Cardiac septum (tissue), 1 donor: ENCODE measurements at regions of chrX and their contacts with region 1.

Region 1: DNA sequence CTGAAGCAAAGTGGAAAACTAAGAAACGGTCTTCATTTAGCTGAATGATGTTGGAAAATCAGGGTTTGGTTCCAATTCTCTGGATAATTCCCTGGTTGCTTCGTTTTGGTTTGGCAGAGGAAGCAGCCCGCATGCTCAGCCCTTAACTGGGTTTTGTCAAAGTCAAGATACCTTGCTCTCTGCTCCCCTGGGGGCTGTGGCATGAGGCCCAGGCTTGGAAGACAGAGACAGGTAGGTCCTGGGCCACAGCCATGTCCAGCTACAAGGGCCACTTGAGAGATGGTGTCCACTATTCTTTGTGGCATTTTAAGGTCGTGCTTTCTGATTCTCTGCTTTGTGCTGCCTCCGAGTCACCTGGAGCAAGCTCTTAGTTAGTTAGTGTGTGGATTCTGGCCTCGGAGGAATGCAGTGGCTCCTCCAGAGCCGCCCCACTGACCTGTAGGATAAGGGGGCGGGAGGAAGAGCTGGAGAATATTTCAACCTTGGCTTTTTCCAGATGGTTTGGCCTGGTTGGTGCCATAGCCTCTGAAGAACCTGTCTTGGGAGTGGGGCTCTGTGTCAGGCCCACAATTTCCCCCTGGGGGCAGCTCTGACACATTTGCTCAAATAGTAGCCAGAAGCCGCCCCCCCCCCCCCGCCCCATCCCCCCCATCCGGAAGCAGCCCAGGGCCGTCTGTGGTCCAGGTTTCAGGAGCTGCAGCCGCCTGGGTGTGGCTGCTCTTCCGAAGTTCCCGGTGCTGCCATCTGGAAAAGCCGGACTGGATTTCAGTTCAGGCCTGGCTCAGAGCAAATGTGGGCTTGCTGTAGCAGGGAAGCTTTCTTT is 147.1 kb downstream of the NHS start:
- DNase-seq: no peak

Region 2: GRCh38 chrX:17374619-17375366 is 147.3 kb before region 1 on chrX and contains the start of gene NHS:
- intact Hi-C with region 1: loop called (anchors 10 kb)
- DNase-seq: no peak
- total RNA-seq, gene NHS: 2.6 TPM

Region 3: DNA sequence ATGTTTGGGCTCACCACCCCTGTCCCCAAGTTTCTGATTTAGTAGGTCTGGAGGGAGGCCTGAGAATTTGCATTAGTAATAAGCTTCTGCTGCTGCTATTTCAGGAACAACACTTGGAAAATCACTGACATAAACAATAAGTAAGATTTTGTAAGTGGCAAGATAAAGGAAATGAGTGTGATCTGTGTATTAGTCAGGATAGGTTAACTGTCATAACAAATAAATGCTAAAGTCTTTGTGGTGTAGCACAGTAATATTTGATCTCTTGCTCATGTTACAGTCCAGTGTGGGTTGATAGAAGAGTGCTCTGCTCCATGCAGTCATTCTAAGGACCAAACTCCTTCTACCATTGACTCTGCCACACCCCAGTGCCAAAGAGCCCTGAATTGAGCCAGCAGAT is 80.1 kb before region 1 on chrX:
- intact Hi-C with region 1: no loop called
- DNase-seq: no peak

Region 4: GRCh38 chrX:17689971-17690409 is 167.9 kb after region 1 on chrX:
- intact Hi-C with region 1: no loop called
- DNase-seq: no peak